ENCODE measurements at regions of chr12 and their contacts with region 1.

Region 1: GRCh38 chr12:31672521-31672920 is 13.0 kb downstream of the ETFBKMT start:
- DNase-seq: no peak
- ATAC-seq: no peak
- H3K4me3 Mint-ChIP-seq: no peak overlapping the region
- H3K27ac Mint-ChIP-seq: no peak overlapping the region
- H3K4me1 Mint-ChIP-seq: peaks cover 16% of the 10 kb centered on the region
- H3K27me3 Mint-ChIP-seq: no peaks in the 10 kb centered on the region; the same call in 1 of the 2 replicates
- CTCF ChIP-seq: no peak

Region 2: GRCh38 chr12:31659087-31659933 is 13.2 kb before region 1 on chr12 and contains the start of gene ETFBKMT:
- CTCF ChIA-PET with region 1: interaction called, 10 read pairs
- POLR2A ChIA-PET with region 1: no interaction called
- DNase-seq: peak; percentile 84
- ATAC-seq: peak; percentile 98
- H3K4me3 Mint-ChIP-seq: peak within 1 kb of the TSS; percentile 96
- H3K27ac Mint-ChIP-seq: peak within 1 kb of the TSS; percentile 98
- H3K4me1 Mint-ChIP-seq: peaks cover 8% of the 10 kb centered on the region; the same call in 1 of the 2 replicates
- H3K27me3 Mint-ChIP-seq: no peaks in the 10 kb centered on the region
- CTCF ChIP-seq: no peak
- total RNA-seq, gene ETFBKMT: 2.0 to 2.2 TPM (median 2.1 TPM) in 3 replicates